Activated CD8-positive, alpha-beta T cell treated with anti-CD3 and anti-CD28 coated beads, Interleukin-2, amount 10 ng/mL, durations not matched to agents 7 days and 5 days (primary cell): ENCODE measurements at regions of chr5 and their contacts with region 1.

Region 1: GRCh38 chr5:177022384-177023308 is at the start of gene ZNF346:
- DNase-seq: peak; percentile 96
- ATAC-seq: peak; percentile 99
- H3K4me3 Mint-ChIP-seq: peak within 1 kb of the TSS; percentile 99
- H3K27ac Mint-ChIP-seq: peak within 1 kb of the TSS; percentile 96
- H3K4me1 Mint-ChIP-seq: peaks cover 40% of the 10 kb centered on the region
- H3K27me3 Mint-ChIP-seq: no peaks in the 10 kb centered on the region
- total RNA-seq, gene ZNF346: 25.1 to 29.8 TPM

Region 2: DNA sequence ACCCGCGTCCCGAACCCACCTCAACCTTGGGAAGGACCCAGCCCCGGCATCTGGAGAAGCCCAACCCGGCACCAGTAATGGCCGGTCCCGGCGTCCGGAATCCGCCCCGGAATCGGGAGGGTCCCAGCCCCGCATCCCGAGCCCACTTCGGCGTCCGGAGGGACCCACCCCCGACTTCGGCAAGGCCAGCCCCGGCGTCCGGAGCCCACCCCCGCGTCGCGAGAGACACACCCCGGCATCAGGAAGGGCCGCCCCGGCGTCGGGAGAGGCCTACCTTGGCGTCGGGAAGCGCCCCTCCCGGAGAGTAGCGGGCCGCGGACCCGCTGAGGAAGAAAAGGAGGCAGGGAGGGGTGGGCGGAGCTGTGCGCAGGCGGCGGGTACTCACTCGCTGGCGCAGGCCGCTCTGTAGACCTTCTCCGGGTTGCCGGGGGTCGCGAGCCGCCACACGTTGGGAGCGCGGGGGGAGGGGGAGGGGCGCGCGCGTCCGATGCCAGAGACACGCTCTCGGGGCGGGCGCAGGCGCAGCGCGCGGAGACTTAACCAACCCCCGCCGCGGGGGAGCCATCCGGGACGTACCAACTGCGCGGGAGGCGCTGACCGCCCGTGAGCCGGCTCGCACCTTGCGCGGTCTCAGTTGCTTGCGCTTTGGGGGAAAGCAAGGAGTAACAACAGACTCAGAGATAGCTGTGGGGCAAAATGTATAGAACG is 16.2 kb before region 1 on chr5 and contains the start of gene UIMC1:
- CTCF ChIA-PET with region 1: interaction called, 26 read pairs
- POLR2A ChIA-PET with region 1: interaction called, 32 read pairs
- DNase-seq: peak; percentile 94
- ATAC-seq: peak; percentile 87
- H3K4me3 Mint-ChIP-seq: peak within 1 kb of the TSS; percentile 95
- H3K27ac Mint-ChIP-seq: peak within 1 kb of the TSS; percentile 97
- H3K4me1 Mint-ChIP-seq: peaks cover 25% of the 10 kb centered on the region
- H3K27me3 Mint-ChIP-seq: no peaks in the 10 kb centered on the region
- total RNA-seq, gene UIMC1: 49.4 to 53.0 TPM